ENCODE measurements at regions of chr12 and their contacts with region 1.

Region 1: DNA sequence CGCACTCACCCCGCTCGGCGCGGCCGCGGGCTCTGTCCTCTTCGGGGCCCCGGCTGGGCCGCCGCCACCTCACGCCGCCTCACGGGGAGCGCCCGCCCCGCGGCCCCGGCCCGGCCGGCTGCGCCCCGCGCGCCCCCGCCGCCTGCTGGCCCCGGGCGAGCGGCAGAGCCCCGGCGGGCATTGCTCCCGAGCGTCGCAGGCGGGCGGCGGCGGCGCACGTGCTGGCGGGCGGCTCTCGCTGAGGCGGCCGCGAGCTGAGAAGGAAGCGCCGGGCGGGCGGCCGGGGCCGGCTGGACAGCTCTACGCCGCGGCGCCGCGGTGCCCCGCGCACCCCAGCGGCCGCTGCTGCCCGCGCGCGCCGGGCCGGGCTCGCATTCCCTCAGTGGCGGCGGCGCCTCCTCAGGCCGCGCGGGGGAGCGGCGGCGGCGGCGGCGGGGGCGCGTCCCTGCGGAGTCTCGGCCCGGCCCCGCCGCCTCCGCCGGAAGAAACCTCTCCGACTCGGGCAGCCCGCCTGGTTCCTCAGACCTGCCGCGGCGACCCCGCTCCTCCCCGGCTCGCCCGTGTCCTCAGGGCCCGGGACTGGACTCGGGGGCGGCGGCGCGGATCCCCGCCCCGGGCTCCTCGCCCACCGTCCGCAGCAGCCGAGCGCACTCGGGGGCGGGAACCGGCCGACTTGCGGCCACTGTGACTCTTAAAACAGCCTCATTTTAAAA is at the start of gene PITPNM2:
- DNase-seq: peak in 1 of 2 donors; percentile 53
- ATAC-seq: peak; percentile 84 to 85
- H3K4me3 ChIP-seq: peak within 1 kb of the TSS; percentile 64 to 89 (median 79)
- H3K27ac ChIP-seq: peak within 1 kb of the TSS; percentile 79 to 82 (median 80)
- H3K4me1 ChIP-seq: peaks cover 18 to 25% of the 10 kb centered on the region in 2 donors
- H3K27me3 ChIP-seq: no peaks in the 10 kb centered on the region
- CTCF ChIP-seq: peak in 4 of 5 experiments; percentile 59 to 64 (median 60)
- POLR2A ChIP-seq: peak in 1 of 2 donors; percentile 36
- total RNA-seq, gene PITPNM2: 2.1 to 3.8 (median 3.3) TPM

Region 2: GRCh38 chr12:122793685-122794106 is 357.2 kb before region 1 on chr12:
- in situ Hi-C with region 1: no loop called
- intact Hi-C with region 1: no loop called
- DNase-seq: no peak
- ATAC-seq: peak; percentile 62 to 69
- H3K4me3 ChIP-seq: no peak overlapping the region
- H3K27ac ChIP-seq: no peak overlapping the region
- H3K4me1 ChIP-seq: no peaks in the 10 kb centered on the region
- H3K27me3 ChIP-seq: no peaks in the 10 kb centered on the region
- CTCF ChIP-seq: peak; percentile 37 to 76 (median 56)
- POLR2A ChIP-seq: no peak

Region 3: GRCh38 chr12:122974274-122974891 is 176.5 kb before region 1 on chr12:
- in situ Hi-C with region 1: no loop called
- intact Hi-C with region 1: loop called (anchors 5 kb)
- DNase-seq: peak; percentile 97
- ATAC-seq: peak; percentile 97 to 98
- H3K4me3 ChIP-seq: peak overlapping the region; percentile 85 to 100 (median 91)
- H3K27ac ChIP-seq: peak overlapping the region; percentile 96 to 100 (median 98)
- H3K4me1 ChIP-seq: peaks cover 24 to 37% of the 10 kb centered on the region in 2 donors
- H3K27me3 ChIP-seq: no peaks in the 10 kb centered on the region
- CTCF ChIP-seq: peak in 1 of 5 experiments; percentile 12
- POLR2A ChIP-seq: no peak

Region 4: GRCh38 chr12:123034865-123035264 is 116.0 kb before region 1 on chr12:
- in situ Hi-C with region 1: loop called in 3 of 4 experiments (anchors 5 to 10 kb)
- intact Hi-C with region 1: no loop called
- DNase-seq: no peak
- ATAC-seq: no peak
- H3K4me3 ChIP-seq: no peak overlapping the region
- H3K27ac ChIP-seq: no peak overlapping the region
- H3K4me1 ChIP-seq: no peaks in the 10 kb centered on the region
- H3K27me3 ChIP-seq: no peaks in the 10 kb centered on the region
- CTCF ChIP-seq: no peak
- POLR2A ChIP-seq: no peak

Region 5: DNA sequence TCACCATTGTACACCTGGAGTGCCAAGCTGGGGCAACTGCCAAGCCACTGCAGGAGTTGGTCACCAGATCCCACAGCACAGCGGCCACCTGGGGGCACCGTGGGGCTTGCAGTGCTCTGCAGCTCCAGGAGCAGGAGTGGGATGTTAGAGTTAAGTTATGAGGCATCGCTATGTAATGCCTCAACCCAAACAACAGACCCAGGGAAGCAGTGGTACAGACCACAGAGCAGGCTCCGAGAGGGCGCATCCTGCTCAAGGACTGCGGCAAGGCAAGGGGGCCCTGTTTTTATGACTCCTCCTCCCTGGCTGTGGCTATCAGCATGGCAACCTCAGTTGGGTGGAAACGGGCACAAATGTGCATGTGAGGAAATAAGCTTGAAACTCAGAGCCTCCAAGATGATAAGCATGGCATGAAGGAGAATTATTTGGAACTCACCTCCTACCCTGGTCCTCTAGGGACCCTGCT is 107.3 kb before region 1 on chr12:
- in situ Hi-C with region 1: loop called (anchors 5 to 10 kb)
- intact Hi-C with region 1: loop called (anchors 1 kb)
- DNase-seq: peak; percentile 75 to 86
- ATAC-seq: peak; percentile 85 to 94
- H3K4me3 ChIP-seq: no peak overlapping the region
- H3K27ac ChIP-seq: peak overlapping the region in 1 of 4 donors; percentile 19
- H3K4me1 ChIP-seq: peaks cover 11 to 16% of the 10 kb centered on the region in 2 donors
- H3K27me3 ChIP-seq: no peaks in the 10 kb centered on the region
- CTCF ChIP-seq: peak; percentile 54 to 87 (median 73)
- POLR2A ChIP-seq: no peak

Region 6: GRCh38 chr12:123050331-123050831 is 100.5 kb before region 1 on chr12:
- in situ Hi-C with region 1: loop called in 3 of 4 experiments (anchors 5 to 10 kb)
- intact Hi-C with region 1: no loop called
- DNase-seq: peak; percentile 77 to 92
- ATAC-seq: peak; percentile 88 to 94
- H3K4me3 ChIP-seq: no peak overlapping the region
- H3K27ac ChIP-seq: peak overlapping the region; percentile 84 to 94 (median 90)
- H3K4me1 ChIP-seq: peaks cover 35% of the 10 kb centered on the region in 2 donors
- H3K27me3 ChIP-seq: no peaks in the 10 kb centered on the region
- CTCF ChIP-seq: no peak
- POLR2A ChIP-seq: no peak

Region 7: DNA sequence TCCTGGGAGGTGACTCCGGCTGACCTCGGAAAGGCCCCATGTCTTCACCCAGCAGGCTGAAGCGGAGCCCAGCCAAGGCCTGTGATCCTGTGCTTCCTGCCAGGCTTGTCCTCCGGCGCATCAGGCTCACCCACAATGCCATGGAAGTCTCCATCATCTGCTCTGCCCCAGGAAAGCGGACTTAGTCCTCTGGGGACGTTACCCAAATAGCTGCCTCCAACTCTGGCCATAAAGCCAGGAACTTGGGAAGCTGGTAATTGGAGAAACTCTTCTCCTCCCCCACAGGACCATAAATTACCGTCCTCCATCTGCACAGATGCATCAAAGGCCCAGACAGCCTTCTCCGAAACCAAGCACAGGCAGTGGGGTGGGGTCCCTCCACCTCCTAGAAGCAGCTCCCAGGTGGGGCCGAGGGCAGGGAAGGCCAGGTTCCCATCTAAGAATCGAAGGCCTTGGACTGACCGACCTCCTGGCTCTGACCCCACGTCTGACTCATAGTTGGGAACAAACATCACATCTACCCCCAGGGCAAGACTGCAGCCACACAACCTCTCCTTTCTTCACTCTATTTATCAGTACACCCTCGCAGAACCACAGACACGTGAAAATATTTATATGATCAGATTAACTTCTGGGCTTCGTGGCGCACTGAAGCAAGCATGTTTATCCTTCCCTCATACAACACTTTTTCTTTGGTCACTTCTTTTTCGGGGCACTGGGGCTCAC is 56.4 kb before region 1 on chr12:
- in situ Hi-C with region 1: no loop called
- intact Hi-C with region 1: loop called (anchors 5 kb)
- DNase-seq: peak; percentile 59 to 73
- ATAC-seq: peak; percentile 52 to 57
- H3K4me3 ChIP-seq: no peak overlapping the region
- H3K27ac ChIP-seq: peak overlapping the region; percentile 76 to 90 (median 88)
- H3K4me1 ChIP-seq: peaks cover 63 to 66% of the 10 kb centered on the region in 2 donors
- H3K27me3 ChIP-seq: no peaks in the 10 kb centered on the region
- CTCF ChIP-seq: no peak
- POLR2A ChIP-seq: no peak

Region 8: DNA sequence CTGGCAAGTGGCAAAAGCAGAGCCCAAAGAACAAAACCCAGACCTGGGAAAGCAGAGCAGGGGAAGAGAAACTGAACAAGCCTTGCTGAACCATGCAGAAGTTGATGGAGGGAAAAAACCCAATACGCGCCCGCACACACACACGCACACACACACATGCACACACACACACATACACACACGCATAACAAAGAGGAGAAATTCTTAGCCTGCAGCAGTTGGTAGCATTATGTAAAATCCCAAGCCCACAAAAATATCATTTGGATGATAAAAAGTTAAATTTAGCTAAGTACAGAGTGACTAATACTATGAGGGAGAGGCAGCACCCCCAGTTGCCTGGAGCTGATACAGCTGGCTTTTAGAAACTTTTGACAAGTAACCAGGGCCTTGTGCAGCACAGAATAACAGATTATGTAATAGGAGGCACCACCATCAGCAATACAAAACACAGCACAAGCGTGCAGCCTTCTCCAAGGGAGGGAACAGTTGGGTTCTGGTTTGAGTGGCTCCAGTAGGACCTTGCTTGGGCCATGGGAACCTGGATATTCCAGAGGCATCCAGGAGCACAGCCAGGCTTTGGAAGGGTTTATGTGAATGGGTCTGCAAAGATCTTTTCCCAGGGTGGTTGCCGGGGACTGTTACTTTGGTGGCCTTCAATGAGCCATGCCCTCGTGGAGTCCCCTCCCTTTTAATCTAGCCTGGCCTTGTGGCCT is 35.3 kb before region 1 on chr12:
- in situ Hi-C with region 1: no loop called
- intact Hi-C with region 1: loop called (anchors 2 kb)
- DNase-seq: peak; percentile 38 to 64
- ATAC-seq: peak; percentile 91 to 93
- H3K4me3 ChIP-seq: no peak overlapping the region
- H3K27ac ChIP-seq: peak overlapping the region; percentile 44 to 68 (median 53)
- H3K4me1 ChIP-seq: peaks cover 21 to 26% of the 10 kb centered on the region in 2 donors
- H3K27me3 ChIP-seq: no peaks in the 10 kb centered on the region
- CTCF ChIP-seq: no peak
- POLR2A ChIP-seq: no peak

Region 9: GRCh38 chr12:123512838-123513665 is 362.2 kb after region 1 on chr12:
- in situ Hi-C with region 1: no loop called
- intact Hi-C with region 1: no loop called
- DNase-seq: no peak
- ATAC-seq: no peak
- H3K4me3 ChIP-seq: no peak overlapping the region
- H3K27ac ChIP-seq: peak overlapping the region in 2 of 4 donors; percentile 18
- H3K4me1 ChIP-seq: no peaks in the 10 kb centered on the region
- H3K27me3 ChIP-seq: no peaks in the 10 kb centered on the region
- CTCF ChIP-seq: no peak
- POLR2A ChIP-seq: no peak

Measured in gastrocnemius medialis (tissue), 4 donors.